Testis (tissue), 5 donors: ENCODE measurements at regions of chr1 and their contacts with region 1.

Region 1: GRCh38 chr1:45011837-45012638 is at the start of gene UROD:
- DNase-seq: peak; percentile 98
- H3K4me3 ChIP-seq: peak within 1 kb of the TSS; percentile 93 to 97
- H3K27ac ChIP-seq: peak within 1 kb of the TSS; percentile 62 to 69
- H3K4me1 ChIP-seq: peaks cover 34% of the 10 kb centered on the region
- H3K27me3 ChIP-seq: no peaks in the 10 kb centered on the region
- CTCF ChIP-seq: no peak
- POLR2A ChIP-seq: no peak
- total RNA-seq, gene UROD: 127 to 187 TPM

Region 2: DNA sequence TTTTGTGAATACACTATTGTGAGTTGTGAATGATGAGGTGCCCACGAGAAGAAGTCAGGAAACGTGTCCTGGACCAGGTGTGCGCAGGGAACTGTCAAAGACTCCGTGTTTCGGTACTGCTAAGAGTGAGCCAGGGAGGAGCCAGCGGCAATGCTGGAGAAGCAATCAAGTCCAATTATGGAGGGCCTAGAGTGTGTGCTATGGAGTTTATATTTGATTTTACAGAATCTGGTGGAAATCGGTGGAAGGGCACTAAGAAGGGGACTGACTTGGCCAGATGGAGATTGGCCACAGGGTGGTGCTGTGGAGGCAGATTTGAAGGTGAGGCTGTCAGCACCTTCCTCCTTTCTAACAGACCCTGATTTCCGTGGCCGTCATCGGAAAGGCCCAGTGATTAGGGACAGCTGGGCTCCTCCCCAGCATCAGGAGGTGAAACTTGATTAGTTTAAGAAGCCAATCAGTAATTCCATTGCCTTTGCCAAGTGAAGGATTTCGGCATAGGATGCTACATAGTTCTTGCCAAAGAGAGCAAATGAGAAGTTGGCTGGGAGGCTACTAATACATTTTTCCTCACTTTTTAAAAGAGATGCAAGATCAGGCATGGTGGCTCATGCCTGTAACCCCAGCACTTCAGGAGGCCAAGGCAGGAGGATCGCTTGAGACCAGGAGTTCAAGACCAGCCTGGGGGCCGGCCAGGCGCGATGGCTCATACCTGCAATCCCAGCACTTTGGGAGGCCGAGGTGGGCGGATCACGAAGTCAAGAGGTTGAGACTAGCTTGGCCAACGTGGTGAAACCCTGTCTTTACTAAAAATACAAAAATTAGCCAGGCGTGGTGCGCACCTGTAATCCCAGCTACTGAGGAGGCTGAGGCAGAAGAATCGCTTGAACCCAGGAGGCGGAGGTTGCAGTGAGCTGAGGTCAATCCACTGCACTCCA is 176.0 kb before region 1 on chr1:
- intact Hi-C with region 1: loop called (anchors 10 kb)
- DNase-seq: peak; percentile 93
- H3K4me3 ChIP-seq: no peak overlapping the region
- H3K27ac ChIP-seq: peak overlapping the region; percentile 6 to 33
- H3K4me1 ChIP-seq: peaks cover 56% of the 10 kb centered on the region
- H3K27me3 ChIP-seq: no peaks in the 10 kb centered on the region
- CTCF ChIP-seq: peak; percentile 81 to 87 (median 84)
- POLR2A ChIP-seq: no peak

Region 3: DNA sequence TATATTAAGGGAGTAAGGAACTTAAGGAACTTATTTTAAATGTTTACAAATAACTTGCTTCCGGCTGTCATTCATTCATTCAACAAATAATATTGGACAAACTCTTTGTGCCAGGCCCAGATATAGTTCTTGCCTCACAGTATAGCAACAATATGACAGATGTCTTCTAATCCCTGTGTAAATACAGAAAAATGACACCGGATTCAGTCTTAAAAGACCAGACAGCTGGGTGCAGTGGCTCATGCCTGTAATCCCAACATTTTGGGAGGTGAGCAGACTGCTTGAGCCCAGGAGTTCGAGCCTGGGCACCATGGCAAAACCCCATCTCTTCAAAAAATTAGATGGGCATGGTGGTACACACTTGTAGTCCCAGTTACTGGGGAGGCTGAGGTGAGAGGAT is 49.3 kb before region 1 on chr1:
- intact Hi-C with region 1: no loop called
- DNase-seq: no peak
- H3K4me3 ChIP-seq: no peak overlapping the region
- H3K27ac ChIP-seq: no peak overlapping the region
- H3K4me1 ChIP-seq: no peaks in the 10 kb centered on the region
- H3K27me3 ChIP-seq: no peaks in the 10 kb centered on the region
- CTCF ChIP-seq: no peak
- POLR2A ChIP-seq: no peak

Region 4: DNA sequence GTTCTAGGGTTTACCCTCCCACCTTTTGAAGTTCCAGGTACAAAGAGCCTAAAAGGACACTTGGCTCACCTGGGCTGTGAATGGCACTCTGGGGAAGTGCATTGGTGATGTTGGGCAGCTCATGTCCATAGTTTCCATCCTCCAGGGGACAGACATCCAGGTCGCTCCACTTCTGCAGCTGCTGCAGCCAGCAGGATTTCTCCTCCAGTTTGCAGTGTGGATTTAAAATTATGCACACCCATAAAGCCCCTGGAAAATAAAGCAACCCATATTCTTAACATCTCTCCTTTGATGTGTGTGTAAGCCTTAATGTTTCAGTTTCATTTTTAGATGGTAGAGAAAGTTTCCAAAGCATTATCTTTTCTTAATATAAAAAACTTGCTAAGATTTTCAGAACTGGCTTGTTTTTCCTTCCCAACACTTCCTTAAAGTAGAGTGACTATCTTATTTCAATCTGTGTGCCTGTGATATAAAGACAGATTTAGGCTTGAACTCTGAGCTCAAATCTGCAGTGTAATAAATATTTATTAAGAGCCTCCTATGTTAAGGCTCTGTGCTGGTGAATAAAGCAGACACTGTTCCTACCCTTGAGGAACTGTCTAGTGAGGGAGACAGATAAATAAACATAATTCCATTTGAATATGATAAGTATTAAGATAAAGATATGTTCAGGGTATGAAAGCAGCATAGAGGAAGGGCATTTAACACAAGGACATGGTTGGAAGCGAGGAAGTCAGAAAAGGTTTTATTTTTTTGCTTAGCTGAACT is 39.2 kb after region 1 on chr1:
- intact Hi-C with region 1: no loop called
- DNase-seq: no peak
- H3K4me3 ChIP-seq: no peak overlapping the region
- H3K27ac ChIP-seq: no peak overlapping the region
- H3K4me1 ChIP-seq: peaks cover 5% of the 10 kb centered on the region
- H3K27me3 ChIP-seq: no peaks in the 10 kb centered on the region
- CTCF ChIP-seq: no peak
- POLR2A ChIP-seq: no peak

Region 5: GRCh38 chr1:45303582-45304310 is 291.7 kb after region 1 on chr1:
- intact Hi-C with region 1: loop called (anchors 5 kb)
- DNase-seq: peak; percentile 99
- H3K4me3 ChIP-seq: peak overlapping the region; percentile 75 to 89
- H3K27ac ChIP-seq: peak overlapping the region; percentile 81 to 92
- H3K4me1 ChIP-seq: peaks cover 13% of the 10 kb centered on the region
- H3K27me3 ChIP-seq: no peaks in the 10 kb centered on the region
- CTCF ChIP-seq: peak; percentile 57 to 84 (median 72)
- POLR2A ChIP-seq: no peak

Region 6: DNA sequence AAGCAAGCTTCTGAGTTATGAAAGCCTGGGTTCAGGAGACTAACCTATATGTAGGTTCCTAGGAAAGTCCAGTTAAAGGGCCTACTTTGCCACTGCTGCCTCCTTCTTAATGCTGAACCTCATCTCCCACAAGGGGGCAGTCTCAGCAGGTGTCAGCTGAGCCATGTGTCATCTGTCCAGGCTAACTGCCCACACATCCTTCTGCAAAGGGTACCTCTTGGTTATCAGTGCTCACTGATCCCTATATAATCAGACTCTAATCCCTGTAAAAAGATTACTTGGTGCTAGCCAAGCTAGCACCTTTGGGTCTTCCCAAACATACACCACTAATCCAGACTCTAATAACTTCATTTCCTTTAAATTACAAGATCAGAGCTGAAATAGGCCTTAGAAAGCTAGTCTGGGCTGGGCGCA is 500.6 kb after region 1 on chr1:
- intact Hi-C with region 1: loop called (anchors 10 kb)
- DNase-seq: peak; percentile 80
- H3K4me3 ChIP-seq: no peak overlapping the region
- H3K27ac ChIP-seq: no peak overlapping the region
- H3K4me1 ChIP-seq: no peaks in the 10 kb centered on the region
- H3K27me3 ChIP-seq: no peaks in the 10 kb centered on the region
- CTCF ChIP-seq: peak in 2 of 3 experiments; percentile 36 to 59
- POLR2A ChIP-seq: no peak